BJ (cell line): ENCODE measurements at regions of chr11 and their contacts with region 1.

Region 1: GRCh38 chr11:5624489-5625279 is at the start of gene TRIM34:
- DNase-seq: no peak
- H3K4me3 ChIP-seq: peak within 1 kb of the TSS; percentile 57
- H3K27me3 ChIP-seq: no peaks in the 10 kb centered on the region
- CTCF ChIP-seq: no peak
- polyA plus RNA-seq, gene TRIM34: 6.6 and 11.0 TPM in 2 replicates

Region 2: GRCh38 chr11:4134844-4135243 is 1489.8 kb before region 1 on chr11:
- CTCF ChIA-PET with region 1: no interaction called
- POLR2A ChIA-PET with region 1: interaction called, 13 read pairs
- DNase-seq: peak; percentile 37
- H3K4me3 ChIP-seq: no peak overlapping the region
- H3K27me3 ChIP-seq: no peaks in the 10 kb centered on the region
- CTCF ChIP-seq: no peak